Colonic mucosa (tissue), 4 donors: ENCODE measurements at regions of chr1 and their contacts with region 1.

Region 1: GRCh38 chr1:1122078-1122811 is 6.4 kb upstream of the C1orf159 start:
- DNase-seq: peak; percentile 90
- H3K4me3 ChIP-seq: peak overlapping the region; percentile 21
- H3K27ac ChIP-seq: peak overlapping the region; percentile 50
- H3K4me1 ChIP-seq: peaks cover 14% of the 10 kb centered on the region
- H3K27me3 ChIP-seq: no peaks in the 10 kb centered on the region
- CTCF ChIP-seq: peak; percentile 83

Region 2: GRCh38 chr1:1250786-1251284 is 128.6 kb after region 1 on chr1:
- intact Hi-C with region 1: loop called (anchors 5 kb)
- DNase-seq: no peak
- H3K4me3 ChIP-seq: no peak overlapping the region
- H3K27ac ChIP-seq: no peak overlapping the region
- H3K4me1 ChIP-seq: no peaks in the 10 kb centered on the region
- H3K27me3 ChIP-seq: peaks cover 19% of the 10 kb centered on the region
- CTCF ChIP-seq: no peak

Region 3: GRCh38 chr1:1291548-1292441 is 169.6 kb after region 1 on chr1:
- intact Hi-C with region 1: loop called (anchors 5 kb)
- DNase-seq: peak; percentile 83
- H3K4me3 ChIP-seq: no peak overlapping the region
- H3K27ac ChIP-seq: no peak overlapping the region
- H3K4me1 ChIP-seq: peaks cover 6% of the 10 kb centered on the region
- H3K27me3 ChIP-seq: peaks cover 8% of the 10 kb centered on the region
- CTCF ChIP-seq: peak; percentile 66

Region 4: DNA sequence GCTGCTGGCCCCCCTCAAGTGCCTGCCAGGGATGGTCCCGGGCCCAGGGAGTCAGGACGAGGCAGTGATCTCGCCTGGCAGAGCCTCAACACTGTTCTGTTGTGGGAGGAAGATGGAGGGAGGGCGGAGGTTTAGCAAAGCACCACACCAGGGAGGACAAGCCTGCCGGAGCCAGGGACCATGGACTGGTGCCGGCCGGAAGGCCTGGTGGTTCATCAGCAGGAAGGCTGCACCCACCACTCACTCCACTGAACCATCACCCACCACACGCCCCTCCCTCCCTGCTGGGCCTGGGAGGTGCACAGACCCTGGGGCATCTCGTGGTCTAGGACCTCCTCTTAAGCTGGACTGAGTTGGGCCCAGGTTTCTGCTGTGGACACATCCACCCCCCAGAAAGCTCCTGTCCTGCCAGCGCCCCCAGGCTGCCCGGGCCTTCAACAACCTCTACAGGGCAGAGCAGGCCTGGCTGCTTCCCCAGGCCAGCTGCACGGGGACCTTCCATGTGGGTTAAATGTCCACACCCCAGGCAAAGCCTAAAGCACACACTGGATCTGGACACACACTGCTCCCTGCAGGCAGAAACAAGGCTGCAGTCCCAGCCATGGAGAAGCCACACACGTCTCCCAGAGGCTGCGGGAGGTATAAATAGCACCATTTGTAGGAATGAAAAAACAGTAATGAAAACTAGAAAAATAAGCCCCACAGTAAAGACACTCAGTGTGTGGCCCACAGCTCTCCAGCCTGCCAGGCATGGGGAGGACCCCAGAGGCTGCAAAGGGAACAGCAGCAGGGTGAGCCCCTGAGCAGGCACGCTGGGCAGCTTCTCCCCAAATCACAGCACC is 428.6 kb after region 1 on chr1:
- intact Hi-C with region 1: no loop called
- DNase-seq: no peak
- H3K4me3 ChIP-seq: no peak overlapping the region
- H3K27ac ChIP-seq: no peak overlapping the region
- H3K4me1 ChIP-seq: no peaks in the 10 kb centered on the region
- H3K27me3 ChIP-seq: no peaks in the 10 kb centered on the region
- CTCF ChIP-seq: no peak